Sigmoid colon (tissue), 7 donors: ENCODE measurements at regions of chr6 and their contacts with region 1.

Region 1: DNA sequence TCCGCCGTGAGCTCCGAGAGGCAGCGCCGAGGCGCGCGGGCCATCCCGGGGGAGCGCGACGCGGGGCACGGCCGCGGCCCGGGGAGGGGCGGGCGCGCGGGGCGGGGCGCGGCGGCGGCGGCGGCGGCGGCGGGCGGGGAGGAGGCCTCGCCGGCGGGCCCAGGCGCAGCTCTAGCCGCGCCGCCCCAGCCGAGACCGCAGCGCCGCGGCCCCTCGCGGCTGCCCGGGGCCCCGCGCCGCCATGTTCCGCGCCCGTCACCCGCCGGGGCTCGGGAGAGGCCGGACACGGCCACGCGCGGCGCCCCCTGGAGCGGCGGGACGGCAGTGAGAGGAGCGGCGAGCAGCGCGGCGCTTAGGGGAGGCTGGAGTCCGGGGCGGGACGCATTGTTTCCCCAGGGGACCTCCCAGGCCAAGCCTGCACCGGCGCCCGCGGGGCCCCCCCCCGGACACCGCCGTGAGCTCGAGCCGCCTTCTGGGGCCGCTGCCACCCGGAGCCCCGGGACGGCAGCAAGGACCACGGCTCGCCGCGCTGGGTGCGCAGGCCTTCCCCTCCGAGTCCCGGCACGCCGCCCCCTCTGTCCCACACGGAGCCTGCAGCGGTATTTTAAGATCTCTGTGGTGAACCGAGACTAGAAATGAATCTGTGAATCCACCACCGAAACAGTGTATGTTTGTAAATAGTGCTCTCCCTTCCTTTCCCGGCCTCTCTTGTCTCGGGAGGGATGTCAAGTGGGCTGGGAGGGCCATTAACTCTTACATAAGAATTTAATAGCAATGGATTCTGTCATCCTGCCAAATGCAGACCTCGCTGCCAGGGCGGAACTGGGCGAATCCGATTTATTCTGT is at the start of gene KIF13A:
- DNase-seq: peak; percentile 84
- H3K4me3 ChIP-seq: peak within 1 kb of the TSS; percentile 77 to 91 (median 86)
- H3K27ac ChIP-seq: peak within 1 kb of the TSS; percentile 94 to 98 (median 96)
- H3K4me1 ChIP-seq: peaks cover 0 to 42% (median 30%) of the 10 kb centered on the region in 4 donors
- H3K27me3 ChIP-seq: no peaks in the 10 kb centered on the region
- CTCF ChIP-seq: peak in 2 of 4 experiments; percentile 22 to 34
- EP300 ChIP-seq: no peak
- POLR2A ChIP-seq: no peak
- total RNA-seq, gene KIF13A: 55.3 to 73.8 (median 62.8) TPM

Region 2: DNA sequence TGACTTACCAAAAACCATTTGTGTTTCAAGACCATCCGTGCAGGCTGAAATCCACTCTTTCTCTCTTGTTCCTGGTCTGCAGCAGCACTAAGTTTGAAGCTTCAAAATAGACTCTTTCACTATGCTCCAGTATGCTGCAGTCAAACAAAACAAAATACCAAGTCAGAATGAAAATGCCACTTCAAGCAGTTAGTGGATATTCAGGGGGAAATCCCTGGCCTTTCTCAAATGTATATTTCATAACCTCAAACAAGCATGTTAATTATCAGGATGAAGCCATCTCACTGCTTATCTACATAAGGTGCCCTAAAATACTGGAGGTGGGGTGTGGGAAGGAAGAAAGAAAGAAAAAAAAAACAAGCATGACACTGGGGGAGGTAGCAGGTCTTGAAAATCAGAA is 1330.0 kb before region 1 on chr6:
- intact Hi-C with region 1: no loop called
- DNase-seq: no peak
- H3K4me3 ChIP-seq: no peak overlapping the region
- H3K27ac ChIP-seq: no peak overlapping the region
- H3K4me1 ChIP-seq: no peaks in the 10 kb centered on the region
- H3K27me3 ChIP-seq: no peaks in the 10 kb centered on the region
- CTCF ChIP-seq: no peak
- EP300 ChIP-seq: no peak
- POLR2A ChIP-seq: no peak

Region 3: DNA sequence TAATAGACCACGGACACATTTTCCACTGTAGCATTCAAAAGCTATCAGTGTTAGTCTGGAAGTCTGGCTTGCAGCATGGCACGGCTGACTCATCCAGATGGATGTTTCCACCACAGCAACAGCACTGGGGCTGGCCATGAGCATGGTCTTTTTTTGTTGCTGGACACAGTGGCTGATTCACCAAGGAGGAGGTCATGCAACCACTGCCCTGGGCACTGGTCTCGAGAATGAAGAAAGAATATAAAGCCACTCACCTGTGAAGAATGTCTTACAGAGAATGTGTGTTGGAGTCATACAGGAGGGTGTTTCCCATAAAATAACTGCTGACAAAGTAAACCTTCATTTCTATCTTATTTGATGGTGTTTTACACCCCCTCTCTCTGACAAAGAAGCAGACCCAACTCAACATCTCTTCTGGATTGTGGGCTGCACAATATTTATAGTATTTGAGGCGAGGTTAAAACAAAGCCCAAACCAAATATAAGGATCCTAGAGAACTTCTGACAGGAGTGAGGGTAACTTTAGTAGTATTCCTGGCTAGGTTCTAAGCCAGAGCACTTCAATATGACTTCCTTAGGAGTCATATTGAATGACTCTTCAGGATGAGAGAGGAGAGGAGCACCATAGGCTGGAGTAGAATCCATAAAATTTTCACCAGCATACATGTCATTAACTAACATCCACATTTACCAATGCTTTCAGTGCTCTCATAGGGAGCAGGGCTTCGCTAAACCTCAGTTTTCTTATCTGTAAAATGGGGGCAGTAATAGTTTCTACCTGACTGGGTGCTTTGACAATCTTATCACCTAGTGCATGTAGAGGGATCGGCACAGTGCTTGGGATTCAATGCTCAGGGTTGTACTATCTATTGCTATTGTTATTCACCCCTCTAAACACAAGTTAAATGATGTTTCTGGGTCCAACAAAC is 121.7 kb before region 1 on chr6:
- intact Hi-C with region 1: loop called (anchors 5 kb)
- DNase-seq: peak; percentile 88
- H3K4me3 ChIP-seq: no peak overlapping the region
- H3K27ac ChIP-seq: peak overlapping the region; percentile 68 to 81 (median 78)
- H3K4me1 ChIP-seq: peaks cover 0 to 81% (median 73%) of the 10 kb centered on the region in 4 donors
- H3K27me3 ChIP-seq: no peaks in the 10 kb centered on the region
- CTCF ChIP-seq: no peak
- EP300 ChIP-seq: peak in 1 of 4 donors; percentile 35
- POLR2A ChIP-seq: no peak

Region 4: DNA sequence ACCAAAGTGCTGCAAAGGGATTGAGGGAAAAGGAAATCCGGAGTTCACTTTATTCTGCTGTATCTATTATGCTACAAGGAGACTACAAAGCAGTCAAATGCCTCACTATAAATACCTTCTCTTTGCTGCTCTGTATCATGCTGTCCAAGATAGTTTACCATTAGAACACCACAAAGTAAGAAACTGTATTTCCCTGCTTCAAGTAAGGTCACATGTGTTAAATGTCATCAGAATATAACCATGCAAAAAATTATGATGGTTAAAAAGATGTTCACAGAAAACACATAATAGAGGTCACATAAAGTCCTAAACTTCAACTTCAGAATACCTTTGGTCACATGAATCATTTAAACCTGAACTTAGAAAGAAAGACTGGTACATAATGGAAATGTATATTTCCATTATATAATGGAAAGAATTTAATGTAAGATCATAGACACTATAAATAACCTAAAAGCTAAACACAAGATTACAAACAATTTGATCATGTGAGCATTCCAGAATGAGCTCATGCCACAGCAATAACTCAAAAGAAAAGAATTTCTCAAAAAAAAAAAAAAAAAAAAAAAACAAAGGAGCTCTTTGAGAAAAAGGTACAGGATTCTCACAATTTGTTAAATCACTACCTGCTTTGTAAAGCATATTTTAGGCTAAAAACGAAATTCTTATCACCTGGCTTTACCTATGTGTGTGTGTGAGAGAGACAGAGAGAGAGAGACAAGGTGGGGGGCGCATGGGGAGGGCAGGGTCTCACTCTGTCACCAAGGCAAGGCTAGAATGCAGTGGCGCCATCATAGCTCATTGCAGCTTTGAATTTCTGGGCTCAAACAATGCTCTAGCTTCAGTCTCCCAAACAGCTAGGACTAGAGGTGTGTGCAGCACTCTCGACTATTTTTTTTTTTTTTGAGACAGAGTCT is 59.0 kb before region 1 on chr6:
- intact Hi-C with region 1: loop called (anchors 5 kb)
- DNase-seq: no peak
- H3K4me3 ChIP-seq: no peak overlapping the region
- H3K27ac ChIP-seq: peak overlapping the region; percentile 36 to 79 (median 74)
- H3K4me1 ChIP-seq: peaks cover 0 to 88% (median 79%) of the 10 kb centered on the region in 4 donors
- H3K27me3 ChIP-seq: no peaks in the 10 kb centered on the region
- CTCF ChIP-seq: no peak
- EP300 ChIP-seq: peak in 1 of 4 donors; percentile 14
- POLR2A ChIP-seq: no peak

Region 5: GRCh38 chr6:18122124-18123093 is 134.6 kb after region 1 on chr6 and contains the start of gene NHLRC1:
- intact Hi-C with region 1: loop called (anchors 2 kb)
- DNase-seq: peak; percentile 95
- H3K4me3 ChIP-seq: peak within 1 kb of the TSS; percentile 44 to 61 (median 52)
- H3K27ac ChIP-seq: peak within 1 kb of the TSS; percentile 42 to 62 (median 52)
- H3K4me1 ChIP-seq: peaks cover 0 to 13% (median 10%) of the 10 kb centered on the region in 4 donors
- H3K27me3 ChIP-seq: no peaks in the 10 kb centered on the region
- CTCF ChIP-seq: peak; percentile 85 to 97 (median 94)
- EP300 ChIP-seq: no peak
- POLR2A ChIP-seq: peak in 1 of 2 donors; percentile 25
- total RNA-seq, gene NHLRC1: 1.2 to 1.9 (median 1.5) TPM

Region 6: DNA sequence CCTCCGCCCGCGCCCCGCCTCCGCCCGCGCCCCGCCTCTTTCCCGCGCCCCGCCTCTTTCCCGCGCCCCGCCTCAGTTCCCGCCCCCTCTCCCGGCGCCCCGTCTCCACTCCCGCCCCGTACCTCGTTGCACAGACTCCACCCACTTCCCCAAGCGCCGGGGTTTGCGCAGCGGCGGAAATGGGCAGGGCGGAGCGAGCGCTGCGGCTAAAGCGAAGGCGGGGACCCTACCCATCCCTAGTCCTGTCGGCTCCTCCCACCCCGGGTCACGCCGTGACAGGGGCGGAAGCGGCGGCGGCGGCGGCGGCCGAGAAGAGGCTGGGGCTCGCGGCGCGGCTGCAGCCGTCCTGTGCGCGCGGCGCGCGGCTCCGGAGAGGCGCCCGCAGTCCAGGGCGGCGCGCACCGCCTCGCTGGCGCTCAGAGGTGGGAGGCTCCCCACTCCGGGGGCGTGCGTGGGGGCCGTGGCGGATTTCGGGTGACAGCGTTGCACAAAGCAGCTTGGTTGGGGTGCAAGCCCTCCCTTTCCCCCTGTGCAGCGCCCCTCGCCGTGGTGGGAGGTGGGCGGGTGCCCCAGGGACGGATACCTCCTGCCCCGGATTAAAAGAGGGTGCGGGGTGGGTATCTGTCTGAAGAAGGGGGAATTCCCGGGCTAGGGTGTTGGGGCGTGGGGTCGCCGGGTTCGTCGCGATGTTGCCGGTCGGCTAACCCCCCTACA is 167.5 kb after region 1 on chr6 and contains the start of gene KDM1B:
- intact Hi-C with region 1: loop called (anchors 1 kb)
- DNase-seq: peak; percentile 99
- H3K4me3 ChIP-seq: peak within 1 kb of the TSS; percentile 70 to 98 (median 94)
- H3K27ac ChIP-seq: peak within 1 kb of the TSS; percentile 88 to 91 (median 90)
- H3K4me1 ChIP-seq: peaks cover 0 to 21% (median 15%) of the 10 kb centered on the region in 4 donors
- H3K27me3 ChIP-seq: no peaks in the 10 kb centered on the region
- CTCF ChIP-seq: no peak
- EP300 ChIP-seq: no peak
- POLR2A ChIP-seq: no peak
- total RNA-seq, gene KDM1B: 10.2 to 14.3 (median 12.2) TPM